ENCODE measurements at regions of chr10 and their contacts with region 1.

Region 1: DNA sequence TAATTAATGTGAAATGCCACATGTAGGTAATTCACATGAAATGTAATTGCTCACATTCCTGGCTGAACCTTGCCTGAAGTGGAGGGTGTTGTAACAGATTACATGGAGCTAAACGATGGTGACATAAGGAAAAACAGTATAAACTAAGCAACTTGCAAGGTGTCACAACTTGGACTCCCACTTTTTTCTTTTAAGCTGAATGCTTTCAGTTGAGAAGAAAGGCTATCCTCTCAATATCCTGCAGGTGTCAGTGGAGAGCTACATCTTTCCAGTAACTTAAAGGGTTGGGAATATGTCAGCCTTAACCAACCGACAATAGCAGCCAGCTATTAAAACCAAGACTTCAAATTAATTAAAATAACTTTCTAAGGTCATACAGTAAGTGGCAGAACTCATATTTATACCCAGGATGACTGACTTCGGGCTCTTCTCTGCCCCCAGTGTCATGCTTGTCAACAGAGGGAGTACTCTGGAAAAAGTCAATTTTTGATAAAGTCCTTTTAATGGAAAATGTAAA is 33.7 kb downstream of the NRBF2 start:
- DNase-seq: peak; percentile 85
- ATAC-seq: peak; percentile 73
- H3K4me3 ChIP-seq: no peak overlapping the region
- H3K27ac ChIP-seq: no peak overlapping the region
- H3K4me1 ChIP-seq: 0 out of 2 replicates have a peak, but pooled peaks cover 2% of the 10 kb centered on the region
- H3K27me3 ChIP-seq: no peaks in the 10 kb centered on the region
- CTCF ChIP-seq: peak; percentile 82
- POLR2A ChIP-seq: no peak
- RAD21 ChIP-seq: peak; percentile 78

Region 2: DNA sequence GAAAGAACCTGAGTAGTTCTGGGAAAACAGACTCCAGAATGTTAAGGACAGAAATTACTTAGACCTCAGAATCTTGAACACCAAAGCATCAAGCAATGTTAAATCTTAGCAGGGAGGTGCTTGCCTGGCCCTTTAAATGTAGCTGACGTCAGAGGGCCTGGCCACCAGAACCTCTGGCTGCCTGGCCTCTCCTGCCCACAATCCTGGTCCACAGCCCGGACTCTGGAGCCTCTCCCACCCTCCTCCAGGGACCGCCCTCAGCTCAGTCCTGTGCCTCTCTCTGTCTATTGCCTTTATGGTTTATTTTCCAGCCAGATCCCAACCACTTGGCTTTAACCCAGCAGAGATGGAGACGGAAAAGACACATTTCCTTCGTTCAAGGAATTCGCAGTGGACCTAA is 308.4 kb before region 1 on chr10:
- CTCF ChIA-PET with region 1: no interaction called
- POLR2A ChIA-PET with region 1: no interaction called
- dilution Hi-C with region 1: no loop called
- in situ Hi-C with region 1: no loop called
- intact Hi-C with region 1: no loop called
- DNase-seq: peak; percentile 3
- ATAC-seq: no peak
- H3K4me3 ChIP-seq: no peak overlapping the region
- H3K27ac ChIP-seq: no peak overlapping the region
- H3K4me1 ChIP-seq: no peaks in the 10 kb centered on the region
- H3K27me3 ChIP-seq: peaks cover 7% of the 10 kb centered on the region
- CTCF ChIP-seq: no peak
- POLR2A ChIP-seq: no peak
- RAD21 ChIP-seq: no peak

Region 3: GRCh38 chr10:63711867-63712716 is 545.3 kb after region 1 on chr10:
- CTCF ChIA-PET with region 1: interaction called, 10 read pairs
- POLR2A ChIA-PET with region 1: interaction called, 3 read pairs
- dilution Hi-C with region 1: loop called (anchors 25 kb)
- in situ Hi-C with region 1: no loop called
- intact Hi-C with region 1: loop called (anchors 2 kb)
- DNase-seq: peak; percentile 97
- ATAC-seq: peak; percentile 79
- H3K4me3 ChIP-seq: no peak overlapping the region
- H3K27ac ChIP-seq: no peak overlapping the region
- H3K4me1 ChIP-seq: peaks cover 17% of the 10 kb centered on the region
- H3K27me3 ChIP-seq: no peaks in the 10 kb centered on the region
- CTCF ChIP-seq: no peak
- POLR2A ChIP-seq: no peak
- RAD21 ChIP-seq: no peak